ENCODE measurements at regions of chr20 and their contacts with region 1.

Region 1: GRCh38 chr20:5580936-5581708 is 169.1 kb upstream of the SHLD1 start:
- DNase-seq: no peak
- ATAC-seq: peak; percentile 30
- H3K4me3 ChIP-seq: no peak overlapping the region
- H3K27ac ChIP-seq: no peak overlapping the region
- H3K4me1 ChIP-seq: peaks cover 0 to 10% of the 10 kb centered on the region in 2 donors
- H3K27me3 ChIP-seq: no peaks in the 10 kb centered on the region
- CTCF ChIP-seq: no peak

Region 2: DNA sequence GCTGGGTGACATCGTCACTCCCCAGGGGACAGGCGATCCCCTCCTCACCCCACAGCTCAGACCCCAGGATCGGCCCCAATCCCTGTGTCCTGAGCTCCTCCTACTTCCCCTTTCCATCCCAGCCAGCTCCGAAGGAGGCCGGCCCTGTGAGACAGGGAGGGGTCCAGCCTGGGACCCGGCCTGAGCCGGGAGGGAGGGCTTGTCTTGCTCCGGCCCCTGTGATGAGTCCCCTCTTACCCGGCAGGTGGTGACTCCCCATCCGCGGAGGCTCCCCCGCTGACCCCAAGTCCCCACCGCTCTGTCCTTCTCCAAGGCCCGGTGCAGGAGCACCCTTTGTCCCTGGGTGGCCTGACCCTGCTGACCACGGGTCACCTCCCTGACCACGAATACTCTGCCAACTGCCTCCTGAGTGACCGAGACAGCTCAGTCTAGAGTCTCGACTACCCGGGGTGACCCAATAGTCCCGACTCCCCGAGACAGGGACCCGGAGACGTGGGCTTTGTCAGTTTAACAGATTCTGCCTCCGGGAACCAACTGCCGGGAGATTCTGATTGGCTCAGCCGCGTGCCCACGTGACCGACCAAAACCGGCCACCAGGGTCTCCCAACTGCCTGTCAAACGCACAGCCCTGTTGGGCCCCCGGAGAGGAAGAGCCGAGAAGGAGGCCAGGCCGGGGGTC is 76.9 kb before region 1 on chr20:
- intact Hi-C with region 1: no loop called
- DNase-seq: peak; percentile 28 to 86 (median 62)
- ATAC-seq: peak; percentile 89
- H3K4me3 ChIP-seq: peak overlapping the region; percentile 42 to 64
- H3K27ac ChIP-seq: peak overlapping the region in 1 of 2 donors; percentile 66
- H3K4me1 ChIP-seq: no peaks in the 10 kb centered on the region
- H3K27me3 ChIP-seq: no peaks in the 10 kb centered on the region
- CTCF ChIP-seq: no peak

Region 3: GRCh38 chr20:5551621-5552020 is 29.5 kb before region 1 on chr20:
- intact Hi-C with region 1: loop called in 1 of 2 experiments (anchors 2 kb)
- DNase-seq: no peak
- ATAC-seq: peak; percentile 10
- H3K4me3 ChIP-seq: no peak overlapping the region
- H3K27ac ChIP-seq: no peak overlapping the region
- H3K4me1 ChIP-seq: no peaks in the 10 kb centered on the region
- H3K27me3 ChIP-seq: no peaks in the 10 kb centered on the region
- CTCF ChIP-seq: no peak

Measured in left lung (tissue), 14 donors.